ENCODE measurements at regions of chr20 and their contacts with region 1.

Region 1: DNA sequence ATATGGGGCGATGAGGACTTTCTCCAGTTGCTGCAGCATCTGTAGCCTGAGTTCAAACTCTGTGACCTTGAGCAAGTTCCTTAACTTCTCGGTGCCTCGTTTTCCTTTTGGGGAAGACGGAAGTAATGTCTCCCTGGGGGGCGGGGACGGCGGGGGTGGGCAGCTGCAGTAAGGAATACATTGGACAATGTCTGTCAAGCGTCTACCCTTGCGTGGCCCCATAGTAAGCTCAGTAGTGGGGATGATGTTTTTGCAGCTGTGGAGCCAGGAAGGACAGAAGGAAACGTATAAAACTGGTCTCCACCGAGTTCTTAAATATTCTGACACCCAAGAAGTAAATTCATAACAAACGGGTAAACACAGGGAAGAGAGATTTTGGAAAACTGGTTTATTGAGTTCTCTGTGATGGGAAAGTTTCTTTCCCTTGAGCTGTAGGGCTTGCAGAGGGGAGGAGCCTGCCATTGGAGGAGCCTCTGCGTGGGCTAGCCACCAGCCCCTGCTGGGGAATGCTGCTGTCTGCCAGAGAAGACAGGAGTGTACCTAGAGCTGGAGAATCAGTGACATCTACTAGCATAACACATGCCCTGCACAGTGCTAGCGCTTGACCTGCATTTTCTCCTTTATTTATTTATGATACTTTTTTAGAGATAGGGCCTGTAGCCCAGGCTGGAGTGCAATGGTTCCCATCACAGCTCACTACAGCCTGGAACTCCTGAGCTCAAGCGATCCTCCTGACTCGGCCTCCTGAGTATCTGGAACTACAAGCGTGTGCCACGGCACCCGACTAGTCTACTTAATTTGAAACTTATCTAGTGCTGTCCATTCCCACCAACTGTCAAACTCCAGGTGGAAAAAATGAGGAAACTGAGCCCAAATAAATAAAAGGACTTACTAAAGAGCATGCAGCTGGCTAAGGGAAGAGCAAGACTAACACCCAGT is 1.2 kb upstream of the ACSS1 start:
- DNase-seq: no peak
- H3K4me3 Mint-ChIP-seq: no peak overlapping the region
- H3K27ac Mint-ChIP-seq: no peak overlapping the region
- H3K4me1 Mint-ChIP-seq: peaks cover 14% of the 10 kb centered on the region
- H3K27me3 Mint-ChIP-seq: peaks cover 43% of the 10 kb centered on the region
- CTCF ChIP-seq: no peak

Region 2: DNA sequence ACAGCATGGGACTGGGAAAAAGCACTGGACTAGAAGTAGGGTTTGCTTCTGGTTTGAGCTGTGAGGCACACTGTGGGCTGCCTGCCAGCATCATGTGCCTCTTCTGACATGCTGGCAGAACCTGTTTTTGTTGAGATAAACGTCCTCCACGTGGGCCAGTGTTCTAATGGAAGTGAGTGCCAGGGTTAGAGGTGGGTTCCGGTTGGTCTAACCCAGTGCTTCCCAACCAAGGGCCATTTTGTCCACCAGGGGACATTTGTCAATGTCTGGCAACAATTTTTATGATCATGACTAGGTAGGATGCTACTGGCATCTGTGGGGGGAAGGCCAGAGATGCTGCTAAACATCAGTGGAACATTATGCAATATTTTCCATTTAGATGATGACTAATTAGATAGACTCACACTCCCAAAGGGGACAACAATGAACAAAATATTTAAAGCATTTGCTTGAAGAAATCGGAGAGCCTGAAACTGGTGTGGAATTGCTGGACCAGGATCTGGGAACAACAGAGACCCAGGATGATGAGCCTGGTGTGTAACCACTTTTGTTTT is 58.8 kb before region 1 on chr20:
- CTCF ChIA-PET with region 1: interaction called, 500 read pairs
- POLR2A ChIA-PET with region 1: interaction called, 144 read pairs
- intact Hi-C with region 1: no loop called
- DNase-seq: peak; percentile 73
- H3K4me3 Mint-ChIP-seq: no peak overlapping the region
- H3K27ac Mint-ChIP-seq: peak overlapping the region; percentile 84
- H3K4me1 Mint-ChIP-seq: peaks cover 38% of the 10 kb centered on the region
- H3K27me3 Mint-ChIP-seq: peaks cover 12% of the 10 kb centered on the region
- CTCF ChIP-seq: no peak

Measured in MCF 10A (cell line).